Adrenal gland (tissue), 19 donors: ENCODE measurements at regions of chr3 and their contacts with region 1.

Region 1: GRCh38 chr3:150721285-150722130 is 17.8 kb upstream of the ERICH6 start:
- DNase-seq: peak in 1 of 7 donors; percentile 28
- H3K4me3 ChIP-seq: peak overlapping the region in 1 of 4 donors; percentile 13
- H3K27ac ChIP-seq: peak overlapping the region in 4 of 5 donors; percentile 6 to 84 (median 49)
- H3K4me1 ChIP-seq: peaks cover 7 to 9% of the 10 kb centered on the region in 2 donors
- H3K27me3 ChIP-seq: no peaks in the 10 kb centered on the region
- CTCF ChIP-seq: peak; percentile 80 to 97 (median 90)
- POLR2A ChIP-seq: no peak

Region 2: GRCh38 chr3:150765949-150766720 is 44.6 kb after region 1 on chr3:
- intact Hi-C with region 1: loop called in 1 of 2 experiments (anchors 5 kb)
- DNase-seq: no peak
- H3K4me3 ChIP-seq: no peak overlapping the region
- H3K27ac ChIP-seq: peak overlapping the region in 1 of 5 donors; percentile 9
- H3K4me1 ChIP-seq: peaks cover 13 to 28% of the 10 kb centered on the region in 2 donors
- H3K27me3 ChIP-seq: no peaks in the 10 kb centered on the region
- CTCF ChIP-seq: no peak
- POLR2A ChIP-seq: no peak

Region 3: GRCh38 chr3:150861851-150862250 is 140.3 kb after region 1 on chr3:
- intact Hi-C with region 1: loop called (anchors 5 to 10 kb)
- DNase-seq: no peak
- H3K4me3 ChIP-seq: no peak overlapping the region
- H3K27ac ChIP-seq: no peak overlapping the region
- H3K4me1 ChIP-seq: no peaks in the 10 kb centered on the region
- H3K27me3 ChIP-seq: no peaks in the 10 kb centered on the region
- CTCF ChIP-seq: no peak
- POLR2A ChIP-seq: no peak

Region 4: DNA sequence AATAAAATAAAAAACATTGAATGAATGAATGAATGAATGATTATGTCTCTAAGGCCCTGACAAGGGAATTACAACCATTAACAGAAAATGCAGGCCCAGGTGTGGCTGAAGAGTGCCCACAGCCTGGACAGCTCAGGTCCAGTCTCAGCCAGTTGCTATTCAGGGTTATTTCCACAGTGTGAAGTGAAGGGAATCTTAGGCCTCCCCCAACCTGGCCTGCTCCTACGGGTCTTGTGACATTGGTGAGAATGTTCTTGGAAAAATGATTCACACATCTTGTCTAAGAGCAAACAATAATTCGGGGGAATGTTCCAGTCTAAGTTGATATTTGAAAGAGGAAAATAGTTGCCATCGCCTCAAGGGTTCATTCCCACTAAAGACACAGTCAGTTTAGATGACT is 146.8 kb after region 1 on chr3:
- intact Hi-C with region 1: loop called (anchors 5 to 10 kb)
- DNase-seq: peak in 5 of 7 donors; percentile 31 to 57 (median 41)
- H3K4me3 ChIP-seq: no peak overlapping the region
- H3K27ac ChIP-seq: peak overlapping the region in 1 of 5 donors; percentile 20
- H3K4me1 ChIP-seq: peaks cover 0 to 6% of the 10 kb centered on the region in 2 donors
- H3K27me3 ChIP-seq: no peaks in the 10 kb centered on the region
- CTCF ChIP-seq: no peak
- POLR2A ChIP-seq: no peak